Right cardiac atrium (tissue), 5 donors: ENCODE measurements at regions of chr4 and their contacts with region 1.

Region 1: GRCh38 chr4:1726146-1726934 is 5.0 kb downstream of the TACC3 start:
- DNase-seq: peak; percentile 85 to 96 (median 94)
- ATAC-seq: peak; percentile 55
- H3K4me3 ChIP-seq: no peak overlapping the region
- H3K27ac ChIP-seq: peak overlapping the region; percentile 44
- H3K4me1 ChIP-seq: no peaks in the 10 kb centered on the region
- H3K27me3 ChIP-seq: no peaks in the 10 kb centered on the region

Region 2: DNA sequence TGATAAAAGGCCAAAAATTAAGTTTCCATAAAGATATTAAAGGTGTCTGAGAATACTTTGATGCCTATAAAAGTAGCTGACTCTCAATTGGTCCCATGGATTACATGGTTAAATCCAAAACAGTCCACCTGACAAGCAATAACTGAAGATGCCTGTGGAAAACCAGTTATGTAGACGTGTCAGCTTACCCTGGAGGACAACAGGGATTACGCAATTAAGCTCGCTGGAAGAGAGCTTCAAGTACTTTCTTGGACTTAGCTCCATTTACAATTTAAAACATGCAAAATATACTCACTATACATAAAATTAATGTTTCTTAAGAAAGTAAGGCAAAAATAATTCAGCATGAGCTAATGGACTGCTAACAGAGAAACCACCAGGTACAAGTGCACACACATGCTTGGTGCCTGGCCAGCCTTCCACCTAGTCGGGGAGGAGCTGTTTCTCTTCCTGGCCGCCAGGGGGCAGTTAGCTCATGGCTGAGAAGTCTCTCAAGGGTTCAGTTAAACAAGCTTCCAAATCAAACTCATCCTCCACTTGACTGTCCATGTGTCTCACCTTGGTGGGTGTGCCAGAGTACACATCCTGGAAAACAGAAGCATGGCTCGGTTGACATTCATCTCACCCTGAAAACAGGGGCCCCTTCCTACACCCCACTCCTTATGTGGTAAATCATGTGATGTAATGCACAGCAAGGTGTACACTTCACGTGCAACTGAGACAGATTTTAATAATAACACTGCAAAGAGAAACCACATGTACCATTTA is 33.0 kb before region 1 on chr4:
- intact Hi-C with region 1: loop called in 3 of 4 experiments (anchors 5 kb)
- DNase-seq: peak; percentile 64 to 84 (median 81)
- ATAC-seq: peak; percentile 72 to 80
- H3K4me3 ChIP-seq: no peak overlapping the region
- H3K27ac ChIP-seq: peak overlapping the region; percentile 23
- H3K4me1 ChIP-seq: no peaks in the 10 kb centered on the region
- H3K27me3 ChIP-seq: no peaks in the 10 kb centered on the region

Region 3: GRCh38 chr4:1708584-1708983 is 17.8 kb before region 1 on chr4:
- intact Hi-C with region 1: loop called in 1 of 4 experiments (anchors 2 kb)
- DNase-seq: no peak
- ATAC-seq: no peak
- H3K4me3 ChIP-seq: no peak overlapping the region
- H3K27ac ChIP-seq: no peak overlapping the region
- H3K4me1 ChIP-seq: peaks cover 9% of the 10 kb centered on the region
- H3K27me3 ChIP-seq: no peaks in the 10 kb centered on the region